ENCODE measurements at regions of chr17 and their contacts with region 1.

Region 1: GRCh38 chr17:31842183-31843069 is 16.6 kb downstream of the COPRS start:
- DNase-seq: peak; percentile 77
- H3K4me3 ChIP-seq: peak overlapping the region in 1 of 3 experiments; percentile 28
- H3K27ac ChIP-seq: no peak overlapping the region
- H3K4me1 ChIP-seq: peaks cover 16% of the 10 kb centered on the region
- H3K27me3 ChIP-seq: peaks cover 0 to 2% of the 10 kb centered on the region in 2 experiments
- CTCF ChIP-seq: peak; percentile 88 to 92
- POLR2A ChIP-seq: no peak

Region 2: GRCh38 chr17:31388770-31389661 is 453.4 kb before region 1 on chr17:
- CTCF ChIA-PET with region 1: interaction called, 12 read pairs
- POLR2A ChIA-PET with region 1: no interaction called
- dilution Hi-C with region 1: no loop called
- intact Hi-C with region 1: loop called (anchors 2 kb)
- DNase-seq: peak; percentile 32
- H3K4me3 ChIP-seq: no peak overlapping the region
- H3K27ac ChIP-seq: no peak overlapping the region
- H3K4me1 ChIP-seq: no peaks in the 10 kb centered on the region
- H3K27me3 ChIP-seq: peaks cover 13 to 17% of the 10 kb centered on the region in 2 experiments
- CTCF ChIP-seq: peak; percentile 78 to 90
- POLR2A ChIP-seq: no peak

Region 3: GRCh38 chr17:31524926-31525800 is 317.3 kb before region 1 on chr17:
- CTCF ChIA-PET with region 1: interaction called, 48 read pairs
- POLR2A ChIA-PET with region 1: no interaction called
- dilution Hi-C with region 1: no loop called
- intact Hi-C with region 1: loop called (anchors 1 kb)
- DNase-seq: peak; percentile 51
- H3K4me3 ChIP-seq: no peak overlapping the region
- H3K27ac ChIP-seq: no peak overlapping the region
- H3K4me1 ChIP-seq: no peaks in the 10 kb centered on the region
- H3K27me3 ChIP-seq: no peaks in the 10 kb centered on the region
- CTCF ChIP-seq: peak; percentile 92 to 93
- POLR2A ChIP-seq: no peak

Region 4: GRCh38 chr17:31549525-31550388 is 292.7 kb before region 1 on chr17:
- CTCF ChIA-PET with region 1: interaction called, 187 read pairs
- POLR2A ChIA-PET with region 1: no interaction called
- dilution Hi-C with region 1: no loop called
- intact Hi-C with region 1: loop called (anchors 2 kb)
- DNase-seq: peak; percentile 92
- H3K4me3 ChIP-seq: peak overlapping the region; percentile 54 to 66 (median 63)
- H3K27ac ChIP-seq: peak overlapping the region; percentile 2
- H3K4me1 ChIP-seq: peaks cover 3% of the 10 kb centered on the region
- H3K27me3 ChIP-seq: peaks cover 0 to 4% of the 10 kb centered on the region in 2 experiments
- CTCF ChIP-seq: no peak
- POLR2A ChIP-seq: peak; percentile 17

Region 5: GRCh38 chr17:31581022-31581490 is 261.4 kb before region 1 on chr17:
- CTCF ChIA-PET with region 1: interaction called, 33 read pairs
- POLR2A ChIA-PET with region 1: no interaction called
- dilution Hi-C with region 1: no loop called
- intact Hi-C with region 1: no loop called
- DNase-seq: peak; percentile 78
- H3K4me3 ChIP-seq: no peak overlapping the region
- H3K27ac ChIP-seq: peak overlapping the region; percentile 59
- H3K4me1 ChIP-seq: peaks cover 57% of the 10 kb centered on the region
- H3K27me3 ChIP-seq: no peaks in the 10 kb centered on the region
- CTCF ChIP-seq: no peak
- POLR2A ChIP-seq: peak; percentile 38

Region 6: DNA sequence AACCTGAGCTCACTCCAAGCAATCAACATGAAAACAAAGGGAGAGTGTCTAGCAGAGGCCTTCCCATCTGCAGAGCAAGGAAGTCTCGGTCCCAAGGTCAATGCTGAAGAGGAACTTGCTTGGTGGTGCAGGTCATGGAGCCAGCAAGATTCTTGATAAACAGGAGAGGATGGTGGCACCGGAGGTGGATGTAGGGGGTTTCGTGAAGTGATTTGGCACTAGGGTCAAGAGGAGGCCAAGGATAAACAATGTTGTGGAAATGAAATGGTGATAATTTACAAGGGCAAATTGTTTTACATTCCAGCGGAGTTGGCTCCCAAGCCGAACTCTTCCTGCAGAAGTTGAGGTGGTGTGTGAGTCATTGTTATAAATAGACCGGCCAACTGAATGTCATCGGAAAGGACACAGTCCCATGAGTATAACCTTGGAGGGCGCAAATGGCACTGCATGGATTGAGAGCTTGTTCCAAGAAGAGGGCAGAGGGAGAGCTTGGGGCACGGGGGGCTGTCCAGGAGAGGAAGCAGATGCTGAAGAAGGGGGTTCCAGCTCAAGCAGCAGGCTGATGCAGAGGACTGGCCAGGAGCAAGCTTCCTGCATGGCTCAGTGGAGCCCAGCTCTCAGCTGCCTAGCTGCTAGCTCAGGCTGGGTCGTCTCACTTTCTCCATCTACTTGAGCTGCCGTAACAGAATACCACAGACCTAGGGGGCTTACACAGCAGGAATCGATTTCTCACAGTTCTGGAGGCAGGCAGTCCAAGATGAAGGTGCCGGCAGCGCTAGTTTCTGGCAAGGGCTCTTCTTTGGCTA is 120.0 kb before region 1 on chr17:
- CTCF ChIA-PET with region 1: interaction called, 34 read pairs
- POLR2A ChIA-PET with region 1: interaction called, 4 read pairs
- dilution Hi-C with region 1: no loop called
- intact Hi-C with region 1: loop called (anchors 1 kb)
- DNase-seq: peak; percentile 97
- H3K4me3 ChIP-seq: no peak overlapping the region
- H3K27ac ChIP-seq: peak overlapping the region; percentile 91
- H3K4me1 ChIP-seq: peaks cover 39% of the 10 kb centered on the region
- H3K27me3 ChIP-seq: no peaks in the 10 kb centered on the region
- CTCF ChIP-seq: no peak
- POLR2A ChIP-seq: peak; percentile 46

Region 7: DNA sequence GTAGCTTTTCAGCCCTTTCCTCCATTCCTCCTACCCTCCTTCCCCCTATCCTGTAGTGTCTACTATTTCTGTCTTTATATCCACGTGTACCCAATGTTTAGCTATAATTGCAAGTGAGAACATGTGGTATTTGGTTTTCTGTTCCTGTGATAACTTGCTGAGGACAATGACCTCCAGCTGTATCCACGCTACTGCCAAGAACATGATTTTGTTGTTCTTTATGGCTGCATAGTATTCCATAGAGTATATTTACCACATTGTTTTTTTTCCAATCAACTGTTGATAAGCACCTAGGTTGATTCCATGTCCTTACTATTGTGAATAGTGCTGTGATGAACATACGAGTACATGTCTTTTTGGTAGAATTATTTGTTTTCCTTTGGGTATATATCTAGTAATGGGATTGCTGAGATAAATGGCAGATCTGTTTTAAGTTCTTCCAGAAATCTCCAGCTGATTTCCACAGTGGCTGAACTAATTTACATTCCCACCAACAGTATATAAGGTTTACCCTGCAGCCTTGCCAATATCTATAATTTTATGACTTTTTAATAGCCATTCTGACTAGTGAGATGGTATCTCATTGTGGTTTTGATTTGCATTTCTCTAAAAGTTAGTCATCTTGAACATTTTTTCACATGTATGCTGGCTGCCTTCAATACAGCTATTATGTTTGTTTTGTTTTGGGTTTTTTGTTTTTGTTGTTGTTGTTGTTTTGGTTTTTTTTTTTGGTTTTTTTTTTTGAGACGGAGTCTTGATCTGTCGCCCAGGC is 27.6 kb after region 1 on chr17:
- CTCF ChIA-PET with region 1: no interaction called
- POLR2A ChIA-PET with region 1: no interaction called
- dilution Hi-C with region 1: no loop called
- intact Hi-C with region 1: no loop called
- DNase-seq: no peak
- H3K4me3 ChIP-seq: no peak overlapping the region
- H3K27ac ChIP-seq: no peak overlapping the region
- H3K4me1 ChIP-seq: no peaks in the 10 kb centered on the region
- H3K27me3 ChIP-seq: no peaks in the 10 kb centered on the region
- CTCF ChIP-seq: no peak
- POLR2A ChIP-seq: no peak